Sciatic nerve (tissue), 2 donors: ENCODE measurements at regions of chr12 and their contacts with region 1.

Region 1: GRCh38 chr12:34333337-34333736 is 311.0 kb downstream of the ALG10 start:
- DNase-seq: no peak
- ATAC-seq: no peak

Region 2: GRCh38 chr12:34306133-34306830 is 27.1 kb before region 1 on chr12:
- intact Hi-C with region 1: loop called (anchors 2 kb)
- DNase-seq: no peak
- ATAC-seq: no peak